Mucosa of descending colon (tissue), 3 donors: ENCODE measurements at regions of chr1 and their contacts with region 1.

Region 1: GRCh38 chr1:157992031-157992832 is 1.2 kb upstream of the KIRREL1 start:
- DNase-seq: peak in 2 of 3 donors; percentile 72 to 80
- ATAC-seq: peak; percentile 77
- H3K4me3 ChIP-seq: no peak overlapping the region
- H3K4me1 ChIP-seq: peaks cover 2% of the 10 kb centered on the region
- CTCF ChIP-seq: peak; percentile 92

Region 2: GRCh38 chr1:157678721-157679120 is 313.5 kb before region 1 on chr1:
- intact Hi-C with region 1: no loop called
- DNase-seq: no peak
- ATAC-seq: no peak
- H3K4me3 ChIP-seq: no peak overlapping the region
- H3K4me1 ChIP-seq: no peaks in the 10 kb centered on the region
- CTCF ChIP-seq: no peak

Region 3: GRCh38 chr1:157798211-157798610 is 194.0 kb before region 1 on chr1:
- intact Hi-C with region 1: no loop called
- DNase-seq: no peak
- ATAC-seq: no peak
- H3K4me3 ChIP-seq: no peak overlapping the region
- H3K4me1 ChIP-seq: no peaks in the 10 kb centered on the region
- CTCF ChIP-seq: no peak

Region 4: DNA sequence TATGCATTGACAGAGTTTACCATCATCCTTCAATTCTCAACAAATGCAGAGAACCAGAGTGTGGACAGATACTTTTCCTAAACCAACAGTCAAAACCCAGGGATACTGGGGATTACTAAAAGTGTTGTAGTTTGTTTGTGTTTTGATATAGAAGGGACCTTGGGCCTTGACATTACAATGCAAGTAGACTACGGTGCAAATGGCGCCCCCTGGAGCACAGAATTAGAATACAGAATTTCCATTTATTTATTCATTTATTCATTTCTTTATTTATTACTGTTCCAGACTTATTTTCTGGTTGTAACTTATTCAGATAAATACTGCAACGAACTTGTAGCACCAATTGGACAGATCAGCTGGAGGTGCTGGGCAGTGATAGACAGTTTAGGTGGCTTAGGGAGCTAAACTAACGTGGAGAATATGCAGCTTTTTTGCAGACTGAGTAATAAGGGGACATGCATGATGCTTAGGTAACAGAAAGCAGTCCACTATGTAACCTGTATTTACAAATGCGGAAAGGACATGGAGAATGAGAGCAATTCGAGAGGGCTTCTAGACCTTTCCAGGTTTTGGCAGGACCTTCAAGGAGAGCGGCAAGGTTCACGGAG is 43.8 kb after region 1 on chr1:
- intact Hi-C with region 1: loop called (anchors 5 kb)
- DNase-seq: peak in 1 of 3 donors; percentile 66
- ATAC-seq: peak; percentile 50
- H3K4me3 ChIP-seq: no peak overlapping the region
- H3K4me1 ChIP-seq: no peaks in the 10 kb centered on the region
- CTCF ChIP-seq: peak; percentile 62

Region 5: DNA sequence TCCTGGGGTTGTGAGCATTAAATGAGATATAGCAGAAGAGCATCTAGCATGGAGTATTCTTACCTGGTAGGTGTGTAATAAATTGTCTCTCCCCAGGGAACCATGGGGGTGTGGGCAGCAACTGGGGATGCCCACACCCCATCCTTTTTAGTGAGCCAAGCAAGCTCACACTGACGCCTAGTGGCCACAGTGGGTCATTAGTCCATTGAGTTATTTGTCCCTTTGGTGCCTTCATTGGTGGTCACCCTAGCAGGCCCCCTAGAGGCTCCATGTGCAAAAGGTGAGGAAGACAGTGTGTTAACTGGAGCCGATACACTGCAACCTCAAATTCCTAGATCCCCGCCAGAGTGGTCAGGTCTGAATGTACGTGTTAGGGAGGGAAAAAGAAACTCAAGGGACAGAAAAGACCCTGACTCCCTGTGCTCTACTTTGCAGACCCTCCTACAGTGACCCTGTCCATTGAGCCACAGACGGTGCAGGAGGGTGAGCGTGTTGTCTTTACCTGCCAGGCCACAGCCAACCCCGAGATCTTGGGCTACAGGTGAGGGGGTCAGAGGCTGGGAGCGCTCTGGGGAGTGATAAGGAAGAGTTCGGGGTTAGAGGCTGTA is 95.2 kb after region 1 on chr1:
- intact Hi-C with region 1: loop called (anchors 5 kb)
- DNase-seq: peak in 1 of 3 donors; percentile 66
- ATAC-seq: peak; percentile 79
- H3K4me3 ChIP-seq: no peak overlapping the region
- H3K4me1 ChIP-seq: no peaks in the 10 kb centered on the region
- CTCF ChIP-seq: peak; percentile 46

Region 6: DNA sequence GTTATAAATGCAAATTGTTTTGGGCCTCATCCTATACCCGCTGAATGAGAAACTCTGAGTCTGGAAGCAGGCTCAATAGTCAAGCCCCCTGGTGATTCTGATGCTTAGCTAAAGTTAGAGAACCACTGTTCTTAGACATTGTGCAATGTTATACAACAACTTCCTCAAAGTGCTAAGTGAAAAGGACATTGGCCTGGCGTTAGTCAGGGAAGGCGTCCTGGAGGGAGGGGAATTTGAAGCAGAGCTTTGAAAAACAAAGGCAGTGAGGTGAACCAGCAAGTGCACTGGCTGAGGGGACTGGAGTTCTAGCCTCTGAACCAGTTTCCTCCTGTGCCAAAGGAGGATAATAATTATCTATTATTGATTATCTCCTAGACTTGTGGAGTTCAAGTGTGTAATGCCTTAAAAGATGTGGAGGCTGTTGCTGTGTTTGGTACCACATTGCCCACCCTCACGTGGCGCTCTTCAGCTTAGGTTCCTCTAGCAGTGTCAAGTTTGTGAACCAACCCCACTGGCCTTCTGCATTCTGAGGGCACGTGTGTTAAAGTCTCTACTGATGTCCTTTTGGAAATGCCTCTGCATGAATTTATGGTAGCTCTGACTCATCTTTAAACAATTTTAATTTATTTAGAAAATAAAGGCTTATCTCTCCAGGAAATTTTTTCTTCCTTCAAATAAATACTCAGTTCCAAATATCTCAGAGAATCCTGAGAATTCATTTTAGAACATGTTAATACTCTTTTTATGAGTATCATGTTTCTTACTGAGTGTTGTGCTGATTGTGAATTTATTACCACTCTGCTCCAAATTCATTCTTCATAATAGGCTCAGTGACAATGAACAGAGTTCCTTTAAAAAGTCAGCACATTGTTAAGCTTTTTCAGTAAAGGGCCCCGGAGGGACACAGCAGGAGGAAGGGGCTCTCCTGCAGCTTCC is 193.8 kb after region 1 on chr1:
- intact Hi-C with region 1: no loop called
- DNase-seq: no peak
- ATAC-seq: peak; percentile 28
- H3K4me3 ChIP-seq: no peak overlapping the region
- H3K4me1 ChIP-seq: peaks cover 5% of the 10 kb centered on the region
- CTCF ChIP-seq: no peak